ENCODE measurements at regions of chr5 and their contacts with region 1.

Region 1: GRCh38 chr5:144634138-144634537 is 463.5 kb downstream of the KCTD16 start:
- DNase-seq: no peak
- H3K27ac ChIP-seq: no peak overlapping the region
- CTCF ChIP-seq: no peak

Region 2: DNA sequence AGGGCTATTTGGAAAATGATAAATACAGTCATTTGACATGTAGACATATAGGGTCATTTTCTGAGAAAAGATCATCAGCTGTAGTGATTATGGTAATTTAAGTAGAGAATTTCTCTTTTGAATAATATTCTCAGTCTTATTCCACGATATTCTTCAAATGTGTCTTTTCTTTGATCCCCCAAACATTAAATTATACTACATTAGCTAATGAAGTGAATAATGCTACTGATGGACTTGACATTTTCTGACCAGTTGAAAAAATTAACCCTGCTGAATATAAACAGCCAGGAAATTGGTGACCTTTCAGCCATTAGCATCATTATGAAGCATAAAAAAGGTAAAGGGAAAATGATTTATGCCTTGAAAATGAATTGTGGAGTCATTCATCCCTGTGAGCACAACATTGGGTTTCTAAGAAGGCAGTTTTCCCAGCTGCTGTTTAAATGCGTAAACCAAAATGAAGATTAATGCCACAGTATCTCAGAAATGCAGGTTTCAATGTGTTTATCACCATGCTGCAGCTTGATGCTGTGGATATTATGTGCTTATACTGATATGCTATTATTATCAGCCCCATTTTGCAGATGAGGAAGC is 25.6 kb after region 1 on chr5:
- CTCF ChIA-PET with region 1: interaction called, 10 read pairs
- POLR2A ChIA-PET with region 1: no interaction called
- DNase-seq: no peak
- H3K27ac ChIP-seq: no peak overlapping the region
- CTCF ChIP-seq: no peak